IMR-90 (cell line): ENCODE measurements at regions of chr20 and their contacts with region 1.

Region 1: GRCh38 chr20:13819885-13820645 is 35.2 kb downstream of the NDUFAF5 start:
- DNase-seq: peak; percentile 49
- ATAC-seq: peak; percentile 57; the same call in 1 of the 2 replicates
- H3K4me3 ChIP-seq: no peak overlapping the region
- H3K27ac ChIP-seq: no peak overlapping the region
- H3K4me1 ChIP-seq: no peaks in the 10 kb centered on the region
- H3K27me3 ChIP-seq: no peaks in the 10 kb centered on the region; the same call in 1 of the 2 replicates
- CTCF ChIP-seq: peak; percentile 55
- POLR2A ChIP-seq: no peak
- RAD21 ChIP-seq: peak; percentile 29; the same call in 1 of the 2 replicates

Region 2: GRCh38 chr20:14055127-14055742 is 235.2 kb after region 1 on chr20:
- CTCF ChIA-PET with region 1: interaction called, 7 read pairs
- POLR2A ChIA-PET with region 1: no interaction called
- dilution Hi-C with region 1: no loop called
- in situ Hi-C with region 1: loop called (anchors 5 kb)
- intact Hi-C with region 1: loop called (anchors 1 kb)
- DNase-seq: peak; percentile 61
- ATAC-seq: peak; percentile 46; the same call in 1 of the 2 replicates
- H3K4me3 ChIP-seq: no peak overlapping the region
- H3K27ac ChIP-seq: no peak overlapping the region
- H3K4me1 ChIP-seq: no peaks in the 10 kb centered on the region
- H3K27me3 ChIP-seq: no peaks in the 10 kb centered on the region
- CTCF ChIP-seq: peak; percentile 66
- POLR2A ChIP-seq: no peak
- RAD21 ChIP-seq: peak; percentile 66

Region 3: GRCh38 chr20:14062786-14063185 is 242.7 kb after region 1 on chr20:
- CTCF ChIA-PET with region 1: interaction called, 4 read pairs
- POLR2A ChIA-PET with region 1: no interaction called
- dilution Hi-C with region 1: no loop called
- in situ Hi-C with region 1: loop called (anchors 5 kb)
- intact Hi-C with region 1: no loop called
- DNase-seq: no peak
- ATAC-seq: no peak
- H3K4me3 ChIP-seq: no peak overlapping the region
- H3K27ac ChIP-seq: no peak overlapping the region
- H3K4me1 ChIP-seq: no peaks in the 10 kb centered on the region
- H3K27me3 ChIP-seq: no peaks in the 10 kb centered on the region
- CTCF ChIP-seq: no peak
- POLR2A ChIP-seq: no peak
- RAD21 ChIP-seq: no peak